ENCODE measurements at regions of chr11 and their contacts with region 1.

Region 1: DNA sequence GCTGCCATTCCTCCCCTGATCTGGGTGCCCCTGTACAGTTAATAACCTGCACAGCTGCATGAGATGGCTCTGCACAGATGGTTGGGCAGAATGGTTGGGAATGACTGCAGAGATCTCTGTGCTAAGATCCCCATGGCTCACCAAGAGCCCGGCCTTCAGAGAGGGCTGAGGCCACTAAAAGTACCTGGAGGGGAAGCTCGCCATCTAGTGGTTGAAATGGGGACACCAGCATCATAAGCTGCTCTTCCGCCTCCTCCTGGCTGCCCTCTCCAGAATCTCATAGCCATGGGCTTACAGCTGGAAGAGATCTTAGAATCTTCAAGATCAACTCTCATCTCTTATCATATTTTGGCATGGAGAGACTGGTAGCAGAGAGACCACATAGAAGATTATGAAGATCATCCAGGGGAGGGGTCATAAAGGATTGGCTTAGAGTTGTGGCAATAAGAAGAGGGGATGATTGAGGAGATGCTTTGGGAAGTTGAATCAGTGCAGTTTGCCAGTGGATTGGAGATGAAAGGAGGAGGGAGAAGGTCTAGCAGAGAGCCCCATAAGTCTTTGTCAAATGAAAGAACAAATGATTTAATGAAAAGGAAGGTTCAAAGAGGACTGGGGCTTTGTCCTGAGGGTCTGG is 22.0 kb upstream of the TLCD5 start:
- DNase-seq: peak; percentile 73
- H3K4me3 ChIP-seq: no peak overlapping the region
- H3K27ac ChIP-seq: no peak overlapping the region
- H3K4me1 ChIP-seq: peaks cover 6% of the 10 kb centered on the region
- H3K27me3 ChIP-seq: peaks cover 0 to 6% of the 10 kb centered on the region in 2 experiments
- CTCF ChIP-seq: peak; percentile 96 to 99
- POLR2A ChIP-seq: no peak

Region 2: GRCh38 chr11:120172054-120172911 is 130.8 kb before region 1 on chr11:
- CTCF ChIA-PET with region 1: interaction called, 111 read pairs
- POLR2A ChIA-PET with region 1: no interaction called
- dilution Hi-C with region 1: no loop called
- intact Hi-C with region 1: loop called (anchors 1 kb)
- DNase-seq: peak; percentile 39
- H3K4me3 ChIP-seq: no peak overlapping the region
- H3K27ac ChIP-seq: no peak overlapping the region
- H3K4me1 ChIP-seq: peaks cover 7% of the 10 kb centered on the region
- H3K27me3 ChIP-seq: peaks cover 31 to 48% of the 10 kb centered on the region in 2 experiments
- CTCF ChIP-seq: peak; percentile 63 to 87
- POLR2A ChIP-seq: no peak

Region 3: DNA sequence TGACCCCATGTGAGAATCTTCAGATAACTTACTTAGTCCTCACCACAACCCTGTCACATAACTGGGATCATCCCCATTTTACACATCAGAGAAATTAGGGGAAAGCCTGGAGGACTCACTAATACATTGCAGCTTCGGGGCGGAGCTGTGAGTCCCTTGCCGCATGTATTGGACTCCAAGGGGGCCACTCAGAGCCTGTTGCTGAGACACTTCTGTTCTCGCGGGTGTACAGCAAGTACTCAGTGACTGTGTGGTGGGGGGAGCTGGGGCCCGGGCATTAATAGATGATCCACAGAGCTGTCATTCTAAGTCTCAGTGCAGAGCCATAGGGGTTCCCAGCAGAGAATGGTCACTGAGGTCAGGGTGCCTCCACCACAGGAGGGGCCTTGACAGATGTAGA is 78.8 kb before region 1 on chr11:
- CTCF ChIA-PET with region 1: interaction called, 327 read pairs
- POLR2A ChIA-PET with region 1: no interaction called
- dilution Hi-C with region 1: no loop called
- intact Hi-C with region 1: no loop called
- DNase-seq: no peak
- H3K4me3 ChIP-seq: no peak overlapping the region
- H3K27ac ChIP-seq: no peak overlapping the region
- H3K4me1 ChIP-seq: peaks cover 11% of the 10 kb centered on the region
- H3K27me3 ChIP-seq: no peaks in the 10 kb centered on the region
- CTCF ChIP-seq: no peak
- POLR2A ChIP-seq: no peak

Region 4: DNA sequence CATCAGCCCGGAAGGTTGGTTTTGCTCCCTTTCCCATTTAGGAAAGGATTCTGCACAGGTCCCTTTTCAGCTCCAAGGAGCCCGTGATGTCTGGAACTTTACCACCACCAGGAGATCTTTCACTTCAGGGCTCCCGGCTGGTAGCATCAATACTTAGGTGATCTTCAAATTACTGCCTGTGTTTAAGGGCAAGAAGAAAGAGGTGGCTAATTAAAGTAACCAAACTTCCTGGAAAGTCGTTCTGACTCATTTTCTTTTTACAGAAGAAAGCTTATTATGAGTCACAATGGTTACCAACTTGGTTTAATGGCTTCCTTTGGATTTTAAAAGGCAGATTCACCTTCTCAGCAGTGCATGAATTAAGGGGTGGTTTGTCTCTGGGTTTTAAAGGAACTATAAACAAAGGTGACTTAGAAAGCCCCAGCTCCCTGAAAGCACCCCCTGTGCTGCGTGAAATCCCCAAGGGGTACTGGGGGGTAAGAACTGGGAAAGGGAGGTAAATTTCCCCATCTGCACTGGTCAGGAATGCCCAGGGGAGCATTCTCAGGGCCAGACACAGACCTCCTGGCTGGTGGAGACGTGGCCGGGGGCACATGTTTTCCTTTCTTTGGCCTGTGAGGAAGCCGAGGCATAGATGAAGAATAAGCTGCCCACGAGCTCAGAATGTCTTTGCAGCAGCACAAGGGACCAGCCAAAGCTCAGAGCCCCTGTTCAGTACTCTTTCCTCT is 54.4 kb before region 1 on chr11:
- CTCF ChIA-PET with region 1: interaction called, 33 read pairs
- POLR2A ChIA-PET with region 1: no interaction called
- dilution Hi-C with region 1: no loop called
- intact Hi-C with region 1: no loop called
- DNase-seq: no peak
- H3K4me3 ChIP-seq: no peak overlapping the region
- H3K27ac ChIP-seq: no peak overlapping the region
- H3K4me1 ChIP-seq: peaks cover 4% of the 10 kb centered on the region
- H3K27me3 ChIP-seq: peaks cover 26 to 37% of the 10 kb centered on the region in 2 experiments
- CTCF ChIP-seq: no peak
- POLR2A ChIP-seq: no peak

Region 5: GRCh38 chr11:120289426-120289825 is 13.7 kb before region 1 on chr11:
- CTCF ChIA-PET with region 1: interaction called, 28 read pairs
- POLR2A ChIA-PET with region 1: no interaction called
- dilution Hi-C with region 1: no loop called
- intact Hi-C with region 1: no loop called
- DNase-seq: no peak
- H3K4me3 ChIP-seq: no peak overlapping the region
- H3K27ac ChIP-seq: no peak overlapping the region
- H3K4me1 ChIP-seq: no peaks in the 10 kb centered on the region
- H3K27me3 ChIP-seq: peaks cover 13 to 22% of the 10 kb centered on the region in 2 experiments
- CTCF ChIP-seq: no peak
- POLR2A ChIP-seq: no peak

Region 6: DNA sequence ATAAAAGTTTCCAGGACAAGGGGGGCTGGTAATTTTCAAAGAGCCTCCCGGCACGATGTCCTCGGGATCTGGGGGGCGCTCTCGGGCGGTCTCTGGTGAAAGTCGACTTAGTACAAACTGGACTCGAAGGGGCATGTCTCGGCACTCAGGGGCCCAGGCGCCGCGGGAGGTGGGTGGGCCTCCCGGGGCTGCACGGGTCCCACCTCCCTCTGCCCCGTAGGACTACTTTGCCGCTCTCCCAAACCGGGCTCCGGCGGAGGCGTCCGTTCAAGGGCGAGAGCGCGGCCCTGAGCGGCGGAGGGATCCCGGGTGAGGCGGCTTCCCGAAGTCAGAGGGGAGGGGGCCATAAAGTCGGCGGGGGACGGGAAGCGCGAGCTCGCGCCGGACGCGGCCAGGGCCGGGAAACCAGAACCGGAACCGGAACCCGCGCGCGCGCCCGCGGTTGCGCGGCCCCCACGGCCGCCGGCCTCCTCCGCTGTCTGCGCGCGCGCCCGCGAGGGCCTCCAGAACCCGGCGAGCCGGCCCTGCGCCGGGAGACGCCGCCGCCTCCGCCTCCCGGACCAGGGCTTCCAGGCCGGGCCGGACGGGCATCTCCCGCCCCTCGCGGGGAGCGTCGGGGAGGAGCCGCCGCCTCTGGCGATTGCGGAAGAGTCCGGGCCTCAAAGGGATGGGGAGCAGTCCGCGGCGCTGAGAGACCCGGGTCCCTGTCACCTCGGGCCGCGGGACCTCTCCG is 33.0 kb after region 1 on chr11 and contains the start of gene ARHGEF12:
- CTCF ChIA-PET with region 1: interaction called, 32 read pairs
- POLR2A ChIA-PET with region 1: no interaction called
- dilution Hi-C with region 1: no loop called
- intact Hi-C with region 1: no loop called
- DNase-seq: peak; percentile 95
- H3K4me3 ChIP-seq: peak within 1 kb of the TSS; percentile 82 to 98 (median 96)
- H3K27ac ChIP-seq: peak within 1 kb of the TSS; percentile 87
- H3K4me1 ChIP-seq: peaks cover 40% of the 10 kb centered on the region
- H3K27me3 ChIP-seq: no peaks in the 10 kb centered on the region
- CTCF ChIP-seq: peak; percentile 42 to 56
- POLR2A ChIP-seq: peak; percentile 80
- total RNA-seq, gene ARHGEF12: 117 and 125 TPM in 2 replicates

Region 7: GRCh38 chr11:120863366-120863805 is 560.3 kb after region 1 on chr11:
- CTCF ChIA-PET with region 1: no interaction called
- POLR2A ChIA-PET with region 1: no interaction called
- dilution Hi-C with region 1: no loop called
- intact Hi-C with region 1: no loop called
- DNase-seq: no peak
- H3K4me3 ChIP-seq: no peak overlapping the region
- H3K27ac ChIP-seq: no peak overlapping the region
- H3K4me1 ChIP-seq: no peaks in the 10 kb centered on the region
- H3K27me3 ChIP-seq: no peaks in the 10 kb centered on the region
- CTCF ChIP-seq: no peak
- POLR2A ChIP-seq: no peak

Region 8: GRCh38 chr11:121257992-121258391 is 954.9 kb after region 1 on chr11:
- CTCF ChIA-PET with region 1: no interaction called
- POLR2A ChIA-PET with region 1: no interaction called
- dilution Hi-C with region 1: no loop called
- intact Hi-C with region 1: no loop called
- DNase-seq: no peak
- H3K4me3 ChIP-seq: no peak overlapping the region
- H3K27ac ChIP-seq: no peak overlapping the region
- H3K4me1 ChIP-seq: no peaks in the 10 kb centered on the region
- H3K27me3 ChIP-seq: peaks cover 0 to 2% of the 10 kb centered on the region in 2 experiments
- CTCF ChIP-seq: no peak
- POLR2A ChIP-seq: no peak

Measured in endothelial cell of umbilical vein (primary cell).